H1 (cell line): ENCODE measurements at regions of chr14 and their contacts with region 1.

Region 1: DNA sequence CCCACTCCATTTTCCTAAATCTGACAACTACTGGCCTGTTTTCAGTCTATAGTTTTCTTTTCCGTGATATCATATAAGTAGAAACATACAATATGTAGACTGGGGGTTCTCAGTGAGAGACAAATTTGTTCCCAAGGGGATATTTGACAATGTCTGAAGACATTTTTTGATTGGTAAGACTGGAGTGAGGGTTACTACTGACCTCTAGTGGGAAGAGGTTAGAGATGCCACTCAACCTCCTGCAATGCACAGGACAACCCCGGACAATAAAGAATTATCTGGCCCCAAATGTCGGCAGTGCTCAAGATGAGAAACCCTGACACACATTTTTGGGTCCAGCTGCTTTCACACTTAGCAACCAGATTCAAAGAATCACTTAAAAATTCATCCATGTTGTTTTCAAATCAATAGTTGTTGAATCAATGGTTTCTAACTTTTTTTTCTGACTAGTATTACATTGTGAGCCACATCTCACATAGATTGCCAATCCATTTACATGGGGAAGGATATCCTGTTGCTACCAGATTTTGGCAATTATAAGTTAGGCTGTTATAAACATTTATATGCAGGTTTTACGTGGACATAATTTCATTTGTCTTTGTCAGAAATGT is 307.1 kb downstream of the RPL10L start:
- DNase-seq: no peak
- H3K4me3 ChIP-seq: no peak overlapping the region
- H3K27ac ChIP-seq: no peak overlapping the region
- H3K4me1 ChIP-seq: no peaks in the 10 kb centered on the region
- H3K27me3 ChIP-seq: no peaks in the 10 kb centered on the region
- CTCF ChIP-seq: peak; percentile 17 to 70 (median 67)
- EP300 ChIP-seq: no peak
- POLR2A ChIP-seq: no peak
- RAD21 ChIP-seq: peak; percentile 86 to 90

Region 2: GRCh38 chr14:46250113-46250703 is 94.2 kb before region 1 on chr14:
- CTCF ChIA-PET with region 1: interaction called, 36 read pairs
- POLR2A ChIA-PET with region 1: no interaction called
- DNase-seq: no peak
- H3K4me3 ChIP-seq: no peak overlapping the region
- H3K27ac ChIP-seq: no peak overlapping the region
- H3K4me1 ChIP-seq: no peaks in the 10 kb centered on the region
- H3K27me3 ChIP-seq: no peaks in the 10 kb centered on the region
- CTCF ChIP-seq: peak in 2 of 3 experiments; percentile 41 to 63; a peak in 2 of 4 replicates
- EP300 ChIP-seq: no peak
- POLR2A ChIP-seq: no peak
- RAD21 ChIP-seq: peak; percentile 65 to 74

Region 3: DNA sequence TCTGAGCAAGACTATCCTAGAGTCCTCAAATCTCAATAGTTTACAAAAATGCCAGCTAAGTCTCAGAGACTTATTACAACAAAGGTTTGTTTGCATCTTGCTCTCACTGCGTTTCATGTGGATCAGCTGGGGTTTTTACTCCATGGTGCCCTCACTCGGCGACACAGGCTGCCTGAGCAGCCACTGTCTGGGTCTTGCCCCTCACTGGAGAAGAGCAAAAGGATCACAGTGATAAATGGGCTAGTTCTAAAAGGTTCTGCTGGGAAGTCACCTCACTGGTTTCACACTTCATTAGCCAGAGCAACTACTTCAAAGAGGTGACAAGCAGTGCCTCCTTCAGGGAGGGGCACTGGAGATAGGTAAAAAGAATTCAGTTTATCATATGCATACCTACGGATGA is 84.9 kb before region 1 on chr14:
- CTCF ChIA-PET with region 1: interaction called, 10 read pairs
- POLR2A ChIA-PET with region 1: no interaction called
- DNase-seq: peak in 1 of 2 experiments; percentile 46
- H3K4me3 ChIP-seq: no peak overlapping the region
- H3K27ac ChIP-seq: no peak overlapping the region
- H3K4me1 ChIP-seq: no peaks in the 10 kb centered on the region
- H3K27me3 ChIP-seq: no peaks in the 10 kb centered on the region
- CTCF ChIP-seq: peak in 2 of 3 experiments; percentile 34 to 35; a peak in 2 of 4 replicates
- EP300 ChIP-seq: no peak
- POLR2A ChIP-seq: no peak
- RAD21 ChIP-seq: peak; percentile 9 to 20; a peak in 1 of 4 replicates

Region 4: GRCh38 chr14:46322730-46323403 is 21.6 kb before region 1 on chr14:
- CTCF ChIA-PET with region 1: interaction called, 12 read pairs
- POLR2A ChIA-PET with region 1: no interaction called
- DNase-seq: no peak
- H3K4me3 ChIP-seq: peak overlapping the region in 1 of 4 experiments; percentile 25; a peak in 1 of 8 replicates
- H3K27ac ChIP-seq: no peak overlapping the region
- H3K4me1 ChIP-seq: peaks cover 0 to 15% (median 9%) of the 10 kb centered on the region in 4 experiments; a peak in 4 of 7 replicates
- H3K27me3 ChIP-seq: peaks cover 0 to 4% (median 2%) of the 10 kb centered on the region in 4 experiments; a peak in 1 of 7 replicates
- CTCF ChIP-seq: no peak
- EP300 ChIP-seq: no peak
- POLR2A ChIP-seq: no peak
- RAD21 ChIP-seq: no peak